ENCODE measurements at regions of chr1 and their contacts with region 1.

Region 1: GRCh38 chr1:211675230-211676105 is at the start of gene NEK2:
- DNase-seq: peak; percentile 97
- H3K4me3 ChIP-seq: peak within 1 kb of the TSS; percentile 80
- H3K27ac ChIP-seq: peak within 1 kb of the TSS; percentile 61
- H3K4me1 ChIP-seq: peaks cover 14% of the 10 kb centered on the region
- H3K27me3 ChIP-seq: no peaks in the 10 kb centered on the region
- CTCF ChIP-seq: no peak
- total RNA-seq, gene NEK2: 45.7 and 48.8 TPM in 2 replicates

Region 2: DNA sequence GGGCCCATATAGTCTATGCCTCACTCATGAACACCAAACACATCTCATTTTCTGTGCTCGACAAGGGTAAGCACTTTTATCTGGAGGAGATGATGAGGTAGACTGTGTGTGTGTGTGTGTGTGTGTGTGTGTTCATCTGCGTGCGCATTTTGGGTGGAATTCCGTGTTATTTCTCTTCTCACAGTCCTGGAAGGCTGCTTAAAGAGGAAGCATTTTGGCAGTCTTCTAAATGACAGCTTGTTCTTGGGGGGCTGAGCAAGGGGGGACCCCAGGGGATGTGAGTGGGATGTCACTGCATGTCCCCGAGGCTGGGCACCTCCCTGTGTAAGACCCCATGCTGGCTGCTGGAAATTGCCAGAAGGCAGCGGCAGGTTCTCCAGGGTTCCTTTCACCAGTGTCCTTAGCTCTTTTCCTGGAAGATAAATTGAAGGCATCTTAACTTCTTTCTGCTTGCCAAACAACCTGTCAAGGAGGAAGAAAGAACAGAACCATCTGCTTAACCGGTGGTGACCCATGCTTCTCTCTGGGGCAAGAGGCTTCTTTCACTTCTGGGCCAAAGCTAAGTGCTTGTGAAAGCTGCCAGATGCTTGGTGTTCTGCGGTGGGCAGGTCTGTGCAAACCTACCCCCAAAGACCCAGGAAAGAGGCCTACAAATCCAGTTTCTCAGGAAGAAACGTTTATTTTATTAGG is 173.6 kb before region 1 on chr1:
- CTCF ChIA-PET with region 1: no interaction called
- POLR2A ChIA-PET with region 1: no interaction called
- intact Hi-C with region 1: no loop called
- DNase-seq: no peak
- H3K4me3 ChIP-seq: no peak overlapping the region
- H3K27ac ChIP-seq: no peak overlapping the region
- H3K4me1 ChIP-seq: no peaks in the 10 kb centered on the region
- H3K27me3 ChIP-seq: no peaks in the 10 kb centered on the region
- CTCF ChIP-seq: no peak

Region 3: DNA sequence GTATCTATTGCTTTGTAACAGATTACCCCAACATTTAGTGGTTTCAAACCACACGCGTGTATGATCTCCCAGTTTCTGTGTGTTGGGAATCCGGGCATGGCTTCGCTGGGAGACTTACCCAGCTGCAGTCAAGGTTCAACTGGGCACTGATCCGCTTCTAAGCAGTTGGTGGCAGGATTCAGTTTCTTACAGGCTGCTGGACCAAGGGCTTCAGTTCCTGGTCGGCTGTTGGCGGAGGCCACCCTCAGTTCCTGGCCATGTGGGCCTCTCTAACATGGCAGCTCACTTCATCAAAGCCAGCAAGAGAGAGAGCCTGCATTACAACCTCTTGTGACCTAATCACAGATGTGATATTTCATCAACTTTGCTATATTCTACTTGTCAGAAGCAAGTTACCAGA is 53.8 kb after region 1 on chr1:
- CTCF ChIA-PET with region 1: no interaction called
- POLR2A ChIA-PET with region 1: no interaction called
- intact Hi-C with region 1: no loop called
- DNase-seq: no peak
- H3K4me3 ChIP-seq: no peak overlapping the region
- H3K27ac ChIP-seq: no peak overlapping the region
- H3K4me1 ChIP-seq: no peaks in the 10 kb centered on the region
- H3K27me3 ChIP-seq: no peaks in the 10 kb centered on the region
- CTCF ChIP-seq: no peak

Region 4: GRCh38 chr1:212284744-212285684 is 609.5 kb after region 1 on chr1 and contains the start of gene PPP2R5A:
- CTCF ChIA-PET with region 1: no interaction called
- POLR2A ChIA-PET with region 1: no interaction called
- intact Hi-C with region 1: loop called (anchors 5 kb)
- DNase-seq: peak; percentile 99
- H3K4me3 ChIP-seq: peak within 1 kb of the TSS; percentile 93
- H3K27ac ChIP-seq: peak within 1 kb of the TSS; percentile 87
- H3K4me1 ChIP-seq: peaks cover 14% of the 10 kb centered on the region
- H3K27me3 ChIP-seq: no peaks in the 10 kb centered on the region
- CTCF ChIP-seq: peak; percentile 33
- total RNA-seq, gene PPP2R5A: 13.9 and 16.7 TPM in 2 replicates